ENCODE measurements at regions of chr1 and their contacts with region 1.

Region 1: DNA sequence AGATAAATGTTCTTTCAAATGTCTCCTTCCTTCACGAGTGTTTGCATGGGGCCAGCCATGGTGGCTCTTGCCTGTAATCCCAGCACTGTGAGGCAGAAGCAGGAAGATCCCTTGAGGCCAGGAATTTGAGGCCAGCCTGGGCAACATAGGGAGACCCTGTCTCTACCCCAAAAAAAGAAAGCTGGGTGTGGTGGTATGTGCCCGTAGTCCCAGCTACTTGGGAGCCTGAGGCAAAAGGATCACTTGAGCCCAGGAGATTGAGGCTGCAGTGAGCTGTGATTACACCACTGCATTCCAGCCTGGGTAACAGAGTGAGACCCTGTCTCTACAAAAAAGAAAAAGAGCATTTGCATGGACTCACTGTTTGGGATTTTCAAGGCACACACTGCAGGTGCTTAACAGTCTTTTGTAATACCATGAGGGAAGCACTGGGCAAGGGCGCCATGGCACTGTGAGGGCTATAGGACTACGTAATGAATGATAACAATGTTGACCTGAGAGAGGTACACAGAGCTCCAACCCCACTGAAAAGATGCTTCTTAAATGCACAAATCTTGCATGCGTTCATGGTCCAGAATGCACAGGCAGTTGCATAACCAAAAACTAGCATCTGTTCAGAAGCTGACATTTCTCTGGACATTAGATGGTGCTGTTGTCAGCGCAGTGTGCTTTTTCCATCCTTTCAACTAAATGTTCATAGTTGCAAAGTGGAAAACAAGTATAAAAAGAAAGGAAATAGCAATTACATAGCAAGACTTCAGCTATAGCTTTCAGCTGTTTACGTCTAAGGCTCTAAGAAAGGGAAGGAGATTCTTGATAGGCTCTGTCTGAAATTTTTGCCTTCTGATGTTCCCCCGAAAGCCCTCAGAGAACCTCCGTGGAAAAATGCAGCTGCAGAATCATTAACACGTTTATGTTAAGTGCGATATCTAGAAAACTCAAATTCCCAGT is 7.8 kb upstream of the TARBP1 start:
- DNase-seq: peak; percentile 48
- H3K4me3 Mint-ChIP-seq: no peak overlapping the region
- H3K27ac Mint-ChIP-seq: peak overlapping the region; percentile 15
- H3K4me1 Mint-ChIP-seq: peaks cover 28% of the 10 kb centered on the region
- H3K27me3 Mint-ChIP-seq: peaks cover 19% of the 10 kb centered on the region
- CTCF ChIP-seq: peak; percentile 63

Region 2: GRCh38 chr1:235093696-235094592 is 607.2 kb after region 1 on chr1:
- CTCF ChIA-PET with region 1: interaction called, 18 read pairs
- intact Hi-C with region 1: no loop called
- DNase-seq: peak; percentile 87
- H3K4me3 Mint-ChIP-seq: peak overlapping the region; percentile 13
- H3K27ac Mint-ChIP-seq: peak overlapping the region; percentile 52
- H3K4me1 Mint-ChIP-seq: peaks cover 15% of the 10 kb centered on the region
- H3K27me3 Mint-ChIP-seq: no peaks in the 10 kb centered on the region
- CTCF ChIP-seq: peak; percentile 87